ENCODE measurements at regions of chr7 and their contacts with region 1.

Region 1: DNA sequence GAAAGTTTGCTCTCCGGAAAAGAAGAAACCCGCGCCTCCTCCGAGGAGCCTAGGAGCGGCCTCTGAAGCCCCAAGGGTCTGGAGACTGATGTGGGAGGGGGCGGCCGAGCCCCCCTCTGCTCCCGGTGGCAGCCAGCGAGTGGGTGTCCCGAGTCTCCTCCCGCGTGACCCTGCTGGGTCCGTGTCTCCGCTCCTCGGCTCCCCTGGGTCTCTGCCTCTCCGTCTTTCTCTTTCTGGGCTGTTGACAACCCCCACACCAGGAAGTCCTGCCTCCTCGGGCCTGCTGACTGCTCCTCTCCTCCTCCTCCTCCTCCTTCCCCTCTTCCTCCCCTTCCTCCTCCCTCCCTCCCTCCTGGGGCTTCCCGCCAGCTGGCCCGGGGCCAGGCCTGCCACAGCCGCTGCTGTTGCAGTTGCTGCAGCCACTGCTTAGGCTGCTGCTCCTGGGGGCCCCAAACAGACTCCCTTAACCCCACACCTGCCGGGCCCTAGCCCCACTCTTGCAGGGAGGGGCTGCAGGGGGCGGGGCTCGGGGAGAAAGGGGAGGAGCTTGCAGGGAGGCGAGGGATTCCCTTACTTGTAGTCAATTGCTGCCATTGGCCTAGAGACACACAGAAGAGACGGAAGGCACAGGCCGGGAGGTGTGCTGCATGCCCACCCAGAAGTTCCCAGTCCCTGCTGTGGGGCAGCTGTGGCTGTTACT is at the start of gene TSC22D4:
- DNase-seq: peak; percentile 97
- total RNA-seq, gene TSC22D4: 25.3 to 29.1 TPM

Region 2: GRCh38 chr7:100556541-100556940 is 77.4 kb after region 1 on chr7:
- intact Hi-C with region 1: loop called (anchors 5 kb)
- DNase-seq: no peak

Region 3: DNA sequence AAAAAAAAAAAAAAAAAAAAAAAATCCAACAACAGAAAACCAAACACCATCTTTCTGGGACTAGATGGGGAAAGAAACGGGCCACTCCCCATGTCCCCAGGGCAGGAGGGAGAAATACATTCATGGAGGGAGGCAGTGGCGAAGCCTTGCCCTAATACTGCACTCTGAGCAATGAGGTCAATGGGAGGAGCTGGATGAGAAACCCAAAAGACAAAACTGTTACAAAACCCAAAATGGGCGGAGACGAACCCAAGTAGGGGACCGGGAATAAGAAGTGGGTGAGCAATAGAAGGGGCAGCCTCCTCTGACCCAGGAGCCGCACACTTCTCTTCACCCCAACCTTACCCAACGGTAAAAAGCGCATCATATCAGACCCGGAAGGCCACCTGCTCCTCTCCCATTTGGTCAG is 201.1 kb after region 1 on chr7:
- intact Hi-C with region 1: loop called (anchors 5 kb)
- DNase-seq: no peak

Region 4: GRCh38 chr7:100691676-100692577 is 212.8 kb after region 1 on chr7:
- intact Hi-C with region 1: loop called (anchors 5 kb)
- DNase-seq: peak; percentile 94